BJ (cell line): ENCODE measurements at regions of chr3 and their contacts with region 1.

Region 1: GRCh38 chr3:33433843-33434242 is 6.4 kb downstream of the UBP1 start:
- DNase-seq: no peak
- H3K4me3 ChIP-seq: no peak overlapping the region
- H3K27me3 ChIP-seq: no peaks in the 10 kb centered on the region
- CTCF ChIP-seq: no peak

Region 2: DNA sequence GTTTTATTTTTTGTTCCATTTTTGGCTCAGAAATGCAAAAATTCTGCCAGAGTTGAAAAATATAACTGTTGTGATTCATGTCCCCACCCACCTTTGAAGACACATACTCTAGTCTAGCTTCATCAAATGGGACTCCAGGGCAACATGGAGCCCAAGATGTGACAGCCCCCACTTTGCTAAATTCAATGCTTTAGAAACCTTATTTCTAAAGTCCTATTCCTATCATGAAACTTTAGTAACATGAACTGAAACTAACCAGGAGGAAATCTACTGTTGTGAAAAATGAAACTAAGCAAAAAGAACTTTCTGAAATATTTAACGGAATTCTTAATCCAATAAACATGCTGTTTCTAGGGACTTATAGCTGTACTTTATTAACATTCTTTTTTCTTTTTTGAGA is 13.9 kb before region 1 on chr3:
- CTCF ChIA-PET with region 1: interaction called, 3 read pairs
- POLR2A ChIA-PET with region 1: interaction called, 24 read pairs
- DNase-seq: no peak
- H3K4me3 ChIP-seq: no peak overlapping the region
- H3K27me3 ChIP-seq: no peaks in the 10 kb centered on the region
- CTCF ChIP-seq: no peak